CD8-positive, alpha-beta T cell (primary cell): ENCODE measurements at regions of chr1 and their contacts with region 1.

Region 1: GRCh38 chr1:182595641-182596240 is 6.7 kb upstream of the RNASEL start:
- DNase-seq: peak; percentile 31 to 73 (median 65)
- ATAC-seq: peak; percentile 90
- H3K4me3 ChIP-seq: no peak overlapping the region
- H3K4me3 Mint-ChIP-seq: no peak overlapping the region
- H3K27ac ChIP-seq: no peak overlapping the region
- H3K27ac Mint-ChIP-seq: no peak overlapping the region
- H3K4me1 ChIP-seq: no peaks in the 10 kb centered on the region
- H3K4me1 Mint-ChIP-seq: no peaks in the 10 kb centered on the region
- H3K27me3 ChIP-seq: no peaks in the 10 kb centered on the region
- H3K27me3 Mint-ChIP-seq: peaks cover 9% of the 10 kb centered on the region
- CTCF ChIP-seq: peak; percentile 86

Region 2: GRCh38 chr1:182446033-182446669 is 149.6 kb before region 1 on chr1:
- CTCF ChIA-PET with region 1: no interaction called
- POLR2A ChIA-PET with region 1: no interaction called
- intact Hi-C with region 1: loop called in 1 of 2 experiments (anchors 5 kb)
- DNase-seq: peak in 2 of 9 experiments; percentile 37 to 55
- ATAC-seq: no peak
- H3K4me3 ChIP-seq: no peak overlapping the region
- H3K4me3 Mint-ChIP-seq: no peak overlapping the region
- H3K27ac ChIP-seq: no peak overlapping the region
- H3K27ac Mint-ChIP-seq: no peak overlapping the region
- H3K4me1 ChIP-seq: no peaks in the 10 kb centered on the region
- H3K4me1 Mint-ChIP-seq: no peaks in the 10 kb centered on the region
- H3K27me3 ChIP-seq: no peaks in the 10 kb centered on the region
- H3K27me3 Mint-ChIP-seq: peaks cover 7% of the 10 kb centered on the region
- CTCF ChIP-seq: peak; percentile 67

Region 3: GRCh38 chr1:182614796-182615454 is 19.2 kb after region 1 on chr1:
- CTCF ChIA-PET with region 1: interaction called, 28 read pairs
- POLR2A ChIA-PET with region 1: interaction called, 3 read pairs
- intact Hi-C with region 1: no loop called
- DNase-seq: peak in 6 of 9 experiments; percentile 12 to 70 (median 42)
- ATAC-seq: peak; percentile 3
- H3K4me3 ChIP-seq: peak overlapping the region; percentile 38 to 46
- H3K4me3 Mint-ChIP-seq: peak overlapping the region; percentile 73
- H3K27ac ChIP-seq: no peak overlapping the region
- H3K27ac Mint-ChIP-seq: peak overlapping the region; percentile 91
- H3K4me1 ChIP-seq: peaks cover 32% of the 10 kb centered on the region
- H3K4me1 Mint-ChIP-seq: peaks cover 30% of the 10 kb centered on the region
- H3K27me3 ChIP-seq: peaks cover 19 to 25% of the 10 kb centered on the region in 2 experiments
- H3K27me3 Mint-ChIP-seq: peaks cover 66% of the 10 kb centered on the region
- CTCF ChIP-seq: no peak

Region 4: DNA sequence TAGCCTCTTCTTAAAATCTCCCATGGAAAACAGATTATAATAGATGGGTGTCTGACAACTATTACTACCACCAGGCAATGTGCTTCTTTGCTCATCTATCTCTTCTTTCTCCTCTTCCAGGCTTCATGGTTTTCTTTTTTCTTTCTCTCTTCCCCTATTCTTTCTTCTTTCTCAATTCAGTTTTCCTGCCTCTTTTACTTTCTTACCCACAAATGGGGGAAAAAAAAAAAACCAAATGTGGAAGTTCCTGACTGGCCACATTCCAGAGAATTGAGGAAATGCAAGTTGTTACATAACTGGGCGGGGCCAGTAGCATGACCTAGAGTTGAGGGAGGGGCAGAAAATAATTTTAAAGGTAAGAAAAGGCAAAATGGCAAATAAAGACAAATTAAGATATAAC is 865.6 kb after region 1 on chr1:
- CTCF ChIA-PET with region 1: no interaction called
- POLR2A ChIA-PET with region 1: no interaction called
- intact Hi-C with region 1: loop called in 1 of 2 experiments (anchors 10 kb)
- DNase-seq: peak in 1 of 9 experiments; percentile 16
- ATAC-seq: no peak
- H3K4me3 ChIP-seq: no peak overlapping the region
- H3K4me3 Mint-ChIP-seq: no peak overlapping the region
- H3K27ac ChIP-seq: no peak overlapping the region
- H3K27ac Mint-ChIP-seq: no peak overlapping the region
- H3K4me1 ChIP-seq: no peaks in the 10 kb centered on the region
- H3K4me1 Mint-ChIP-seq: no peaks in the 10 kb centered on the region
- H3K27me3 ChIP-seq: peaks cover 0 to 9% of the 10 kb centered on the region in 2 experiments
- H3K27me3 Mint-ChIP-seq: peaks cover 20% of the 10 kb centered on the region
- CTCF ChIP-seq: no peak